B cell (primary cell): ENCODE measurements at regions of chr21 and their contacts with region 1.

Region 1: DNA sequence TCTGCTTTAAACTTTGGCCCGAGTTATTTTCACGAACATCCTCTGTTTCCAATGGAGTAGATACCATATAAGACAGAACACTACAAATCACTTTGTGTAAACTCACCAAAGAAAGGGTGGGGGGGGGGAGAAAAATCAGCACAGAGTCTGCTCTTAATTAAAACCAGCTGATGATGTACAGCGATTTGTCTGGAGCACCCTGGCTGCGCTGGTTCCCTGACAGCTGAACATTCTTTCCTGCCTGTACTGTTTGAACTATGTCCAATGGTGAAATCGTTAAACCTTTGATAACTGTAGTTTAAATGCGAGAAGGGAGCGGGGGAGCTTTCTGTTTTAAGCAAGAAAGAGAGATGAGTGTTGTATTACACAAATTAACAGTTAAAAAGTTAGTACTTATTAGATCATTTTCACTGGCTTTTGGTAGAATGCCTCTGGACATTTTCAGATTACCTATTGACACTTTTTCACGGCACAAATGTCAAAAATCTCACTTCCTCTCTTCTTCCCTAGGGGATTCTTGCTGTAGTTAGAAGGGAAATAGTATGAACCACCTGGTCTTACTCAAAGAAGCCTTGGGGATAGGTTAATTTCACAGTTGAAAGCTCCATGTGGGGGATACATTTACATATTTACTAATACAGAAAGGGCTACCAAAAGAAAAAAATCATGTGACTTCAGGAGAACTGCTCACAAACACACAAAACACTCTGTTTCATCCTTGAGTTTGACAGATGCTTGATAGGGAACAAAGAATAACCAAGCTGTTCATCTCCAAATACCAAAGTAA is 140.2 kb upstream of the RUNX1 start:
- DNase-seq: peak; percentile 81
- ATAC-seq: peak; percentile 95
- H3K4me3 ChIP-seq: peak overlapping the region in 1 of 5 experiments; percentile 36
- H3K4me3 Mint-ChIP-seq: peak overlapping the region; percentile 73
- H3K27ac ChIP-seq: no peak overlapping the region
- H3K27ac Mint-ChIP-seq: peak overlapping the region; percentile 54
- H3K4me1 ChIP-seq: peaks cover 18 to 19% of the 10 kb centered on the region in 2 donors
- H3K4me1 Mint-ChIP-seq: peaks cover 27% of the 10 kb centered on the region
- H3K27me3 ChIP-seq: no peaks in the 10 kb centered on the region
- H3K27me3 Mint-ChIP-seq: no peaks in the 10 kb centered on the region
- CTCF ChIP-seq: no peak

Region 2: DNA sequence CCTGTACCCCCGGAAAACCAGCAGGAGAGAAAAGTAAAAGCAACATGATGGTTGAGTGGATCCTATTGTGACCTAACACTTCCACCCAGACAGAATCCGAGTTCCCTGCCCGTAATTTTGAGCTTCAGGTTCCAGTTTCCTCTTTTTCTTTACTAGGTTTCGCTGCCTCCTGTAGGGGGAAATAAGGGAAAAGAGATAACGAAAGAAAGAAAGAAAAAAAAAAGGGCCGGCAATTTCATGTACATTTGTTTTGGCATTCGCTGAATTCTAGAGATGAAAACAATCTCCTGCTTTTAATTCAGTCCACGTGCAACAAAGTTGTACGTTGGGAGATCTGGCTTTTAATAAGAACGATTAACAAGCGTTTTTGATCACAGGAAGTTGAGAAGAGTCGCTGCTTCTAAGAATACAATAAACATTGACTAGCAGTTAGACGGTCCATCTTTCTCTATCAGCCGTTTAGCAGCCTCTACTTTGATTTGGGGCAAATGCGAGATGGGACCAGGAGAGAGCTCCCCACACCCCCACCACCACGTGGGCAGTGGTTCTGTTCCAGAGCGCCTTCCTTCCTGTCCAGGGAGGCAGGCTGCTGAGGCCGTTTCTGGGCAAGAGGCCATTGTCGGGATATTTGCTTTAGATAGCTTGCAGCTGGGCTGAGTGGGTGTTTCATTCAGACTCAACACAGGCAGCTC is 15.7 kb after region 1 on chr21:
- CTCF ChIA-PET with region 1: interaction called, 5 read pairs
- POLR2A ChIA-PET with region 1: interaction called, 4 read pairs
- intact Hi-C with region 1: loop called (anchors 2 kb)
- DNase-seq: peak; percentile 56
- ATAC-seq: peak; percentile 52
- H3K4me3 ChIP-seq: peak overlapping the region; percentile 9 to 59 (median 45)
- H3K4me3 Mint-ChIP-seq: peak overlapping the region; percentile 81
- H3K27ac ChIP-seq: peak overlapping the region; percentile 22 to 45
- H3K27ac Mint-ChIP-seq: peak overlapping the region; percentile 75
- H3K4me1 ChIP-seq: peaks cover 23 to 29% of the 10 kb centered on the region in 2 donors
- H3K4me1 Mint-ChIP-seq: peaks cover 24% of the 10 kb centered on the region
- H3K27me3 ChIP-seq: no peaks in the 10 kb centered on the region
- H3K27me3 Mint-ChIP-seq: no peaks in the 10 kb centered on the region
- CTCF ChIP-seq: no peak